HepG2 (cell line): ENCODE measurements at regions of chr7 and their contacts with region 1.

Region 1: GRCh38 chr7:74206589-74207120 is 3.2 kb upstream of the LAT2 start:
- DNase-seq: peak; percentile 61
- ATAC-seq: peak; percentile 78
- H3K4me3 ChIP-seq: peak overlapping the region in 2 of 3 experiments; percentile 38 to 62; a peak in 3 of 6 replicates
- H3K27ac ChIP-seq: no peak overlapping the region
- H3K4me1 ChIP-seq: 0 out of 2 replicates have a peak, but pooled peaks cover 5% of the 10 kb centered on the region
- H3K27me3 ChIP-seq: no peaks in the 10 kb centered on the region
- CTCF ChIP-seq: peak; percentile 98
- EP300 ChIP-seq: no peak
- POLR2A ChIP-seq: no peak
- RAD21 ChIP-seq: peak; percentile 94

Region 2: DNA sequence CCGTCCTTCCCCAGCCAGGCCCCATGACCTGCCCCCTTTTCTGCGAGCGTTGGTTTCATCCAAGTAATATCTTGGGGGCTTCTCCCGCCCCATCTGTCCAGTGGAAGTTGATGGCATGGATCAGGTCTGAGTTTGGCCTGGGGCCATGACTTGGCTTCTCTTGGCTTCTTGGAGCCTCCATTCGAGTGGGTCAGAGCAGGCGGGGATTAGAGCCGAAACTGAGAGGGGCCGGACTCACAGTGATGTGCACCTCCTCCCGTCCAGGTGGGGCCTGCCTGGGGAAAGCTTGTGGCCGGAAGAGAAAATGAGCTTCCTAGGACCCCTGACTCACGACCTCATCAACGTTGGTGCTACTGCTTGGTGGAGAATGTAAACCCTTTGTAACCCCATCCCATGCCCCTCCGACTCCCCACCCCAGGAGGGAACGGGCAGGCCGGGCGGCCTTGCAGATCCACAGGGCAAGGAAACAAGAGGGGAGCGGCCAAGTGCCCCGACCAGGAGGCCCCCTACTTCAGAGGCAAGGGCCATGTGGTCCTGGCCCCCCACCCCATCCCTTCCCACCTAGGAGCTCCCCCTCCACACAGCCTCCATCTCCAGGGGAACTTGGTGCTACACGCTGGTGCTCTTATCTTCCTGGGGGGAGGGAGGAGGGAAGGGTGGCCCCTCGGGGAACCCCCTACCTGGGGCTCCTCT is 138.1 kb before region 1 on chr7:
- CTCF ChIA-PET with region 1: interaction called, 8 read pairs
- POLR2A ChIA-PET with region 1: no interaction called
- in situ Hi-C with region 1: no loop called
- intact Hi-C with region 1: loop called (anchors 5 kb)
- DNase-seq: no peak
- ATAC-seq: no peak
- H3K4me3 ChIP-seq: no peak overlapping the region
- H3K27ac ChIP-seq: no peak overlapping the region
- H3K4me1 ChIP-seq: peaks cover 3% of the 10 kb centered on the region; the same call in 1 of the 2 replicates
- H3K27me3 ChIP-seq: peaks cover 2 to 10% of the 10 kb centered on the region in 2 experiments; a peak in 4 of 5 replicates
- CTCF ChIP-seq: no peak
- EP300 ChIP-seq: no peak
- POLR2A ChIP-seq: no peak
- RAD21 ChIP-seq: no peak

Region 3: GRCh38 chr7:74272305-74273038 is 65.8 kb after region 1 on chr7:
- CTCF ChIA-PET with region 1: no interaction called
- POLR2A ChIA-PET with region 1: interaction called, 4 read pairs
- in situ Hi-C with region 1: no loop called
- intact Hi-C with region 1: loop called (anchors 10 kb)
- DNase-seq: no peak
- ATAC-seq: peak; percentile 68
- H3K4me3 ChIP-seq: peak overlapping the region; percentile 18 to 50 (median 40); a peak in 4 of 6 replicates
- H3K27ac ChIP-seq: peak overlapping the region; percentile 6
- H3K4me1 ChIP-seq: peaks cover 50% of the 10 kb centered on the region
- H3K27me3 ChIP-seq: no peaks in the 10 kb centered on the region
- CTCF ChIP-seq: no peak
- EP300 ChIP-seq: no peak
- POLR2A ChIP-seq: peak in 1 of 2 experiments; percentile 41; a peak in 2 of 4 replicates
- RAD21 ChIP-seq: no peak

Region 4: GRCh38 chr7:74401137-74401859 is 194.6 kb after region 1 on chr7:
- CTCF ChIA-PET with region 1: interaction called, 47 read pairs
- POLR2A ChIA-PET with region 1: interaction called, 6 read pairs
- in situ Hi-C with region 1: loop called (anchors 5 kb)
- intact Hi-C with region 1: loop called (anchors 1 kb)
- DNase-seq: peak; percentile 49
- ATAC-seq: peak; percentile 66
- H3K4me3 ChIP-seq: no peak overlapping the region
- H3K27ac ChIP-seq: no peak overlapping the region
- H3K4me1 ChIP-seq: no peaks in the 10 kb centered on the region
- H3K27me3 ChIP-seq: no peaks in the 10 kb centered on the region
- CTCF ChIP-seq: peak; percentile 92
- EP300 ChIP-seq: no peak
- POLR2A ChIP-seq: no peak
- RAD21 ChIP-seq: peak; percentile 90

Region 5: GRCh38 chr7:74569501-74570075 is 362.9 kb after region 1 on chr7:
- CTCF ChIA-PET with region 1: no interaction called
- POLR2A ChIA-PET with region 1: no interaction called
- in situ Hi-C with region 1: loop called (anchors 25 kb)
- intact Hi-C with region 1: no loop called
- DNase-seq: no peak
- ATAC-seq: no peak
- H3K4me3 ChIP-seq: no peak overlapping the region
- H3K27ac ChIP-seq: no peak overlapping the region
- H3K4me1 ChIP-seq: peaks cover 20% of the 10 kb centered on the region
- H3K27me3 ChIP-seq: no peaks in the 10 kb centered on the region
- CTCF ChIP-seq: no peak
- EP300 ChIP-seq: no peak
- POLR2A ChIP-seq: no peak
- RAD21 ChIP-seq: no peak